ENCODE measurements at regions of chr2 and their contacts with region 1.

Region 1: DNA sequence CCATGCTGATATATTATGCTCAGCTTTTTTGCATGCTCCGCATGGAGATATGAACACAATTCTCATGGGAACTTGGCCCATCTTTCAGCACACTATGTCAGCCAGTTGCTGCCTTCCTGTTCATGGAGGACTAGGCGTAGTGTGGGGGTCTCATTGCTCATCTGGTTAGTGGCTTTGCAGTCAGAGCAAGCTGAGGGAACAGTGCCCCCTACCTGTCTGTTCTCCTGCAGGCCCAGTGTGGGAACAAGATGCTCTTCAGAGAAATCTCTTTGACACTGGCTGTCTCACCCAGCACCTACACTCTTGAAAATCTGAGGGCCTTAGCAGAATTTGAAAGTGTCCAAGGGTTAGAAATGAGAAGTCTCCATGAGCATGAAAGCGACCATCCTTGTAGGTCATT is 47.1 kb downstream of the SPTBN1 start:
- DNase-seq: peak; percentile 66
- H3K4me3 ChIP-seq: no peak overlapping the region
- H3K27ac ChIP-seq: no peak overlapping the region
- H3K4me1 ChIP-seq: peaks cover 4% of the 10 kb centered on the region
- H3K27me3 ChIP-seq: no peaks in the 10 kb centered on the region
- CTCF ChIP-seq: peak; percentile 71 to 80
- POLR2A ChIP-seq: no peak

Region 2: GRCh38 chr2:54115284-54116137 is 387.7 kb before region 1 on chr2 and contains the start of gene ACYP2:
- CTCF ChIA-PET with region 1: interaction called, 4 read pairs
- POLR2A ChIA-PET with region 1: no interaction called
- dilution Hi-C with region 1: no loop called
- intact Hi-C with region 1: loop called (anchors 2 kb)
- DNase-seq: peak; percentile 92
- H3K4me3 ChIP-seq: peak within 1 kb of the TSS; percentile 53 to 91 (median 74)
- H3K27ac ChIP-seq: peak within 1 kb of the TSS; percentile 93
- H3K4me1 ChIP-seq: peaks cover 6% of the 10 kb centered on the region
- H3K27me3 ChIP-seq: no peaks in the 10 kb centered on the region
- CTCF ChIP-seq: peak in 1 of 2 donors; percentile 25
- POLR2A ChIP-seq: no peak
- total RNA-seq, gene ACYP2: 5.8 and 7.9 TPM in 2 replicates

Region 3: DNA sequence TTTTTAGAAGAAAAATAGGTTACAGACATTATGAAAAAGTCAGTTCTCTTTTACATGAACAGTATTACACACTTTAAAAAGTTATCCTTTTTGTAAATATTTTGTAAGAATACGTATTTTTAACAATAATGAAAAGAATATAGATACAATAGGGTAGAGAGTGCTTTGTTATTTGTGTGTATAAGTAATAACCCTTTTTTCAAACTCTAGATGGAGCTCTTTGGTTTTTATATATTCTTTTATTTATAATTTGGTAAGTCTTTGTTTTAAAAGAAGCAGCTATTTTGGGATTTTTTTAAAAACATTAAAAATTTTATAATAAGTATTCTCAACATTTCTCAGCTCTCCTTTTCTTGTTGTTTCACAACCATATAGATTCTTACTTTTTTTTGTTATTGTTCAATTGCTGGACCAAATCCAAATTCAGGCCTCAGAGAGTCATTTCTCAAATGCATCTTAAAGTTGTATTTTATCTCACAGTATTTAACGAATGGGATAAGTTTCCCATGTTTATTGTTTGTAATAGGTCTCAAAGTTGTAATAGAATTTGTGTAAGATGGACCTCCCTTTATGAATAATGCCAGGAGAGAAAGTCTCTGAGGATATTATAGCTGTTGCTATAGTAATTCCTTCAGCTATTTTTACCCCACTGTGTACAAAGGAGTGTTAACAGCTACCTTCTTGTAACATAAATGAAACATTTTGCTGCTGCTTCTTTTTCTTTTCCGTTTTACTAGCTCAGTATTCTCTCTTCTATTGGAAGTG is 341.4 kb before region 1 on chr2:
- CTCF ChIA-PET with region 1: interaction called, 27 read pairs
- POLR2A ChIA-PET with region 1: no interaction called
- dilution Hi-C with region 1: no loop called
- intact Hi-C with region 1: no loop called
- DNase-seq: peak; percentile 22
- H3K4me3 ChIP-seq: no peak overlapping the region
- H3K27ac ChIP-seq: no peak overlapping the region
- H3K4me1 ChIP-seq: no peaks in the 10 kb centered on the region
- H3K27me3 ChIP-seq: no peaks in the 10 kb centered on the region
- CTCF ChIP-seq: no peak
- POLR2A ChIP-seq: no peak

Region 4: DNA sequence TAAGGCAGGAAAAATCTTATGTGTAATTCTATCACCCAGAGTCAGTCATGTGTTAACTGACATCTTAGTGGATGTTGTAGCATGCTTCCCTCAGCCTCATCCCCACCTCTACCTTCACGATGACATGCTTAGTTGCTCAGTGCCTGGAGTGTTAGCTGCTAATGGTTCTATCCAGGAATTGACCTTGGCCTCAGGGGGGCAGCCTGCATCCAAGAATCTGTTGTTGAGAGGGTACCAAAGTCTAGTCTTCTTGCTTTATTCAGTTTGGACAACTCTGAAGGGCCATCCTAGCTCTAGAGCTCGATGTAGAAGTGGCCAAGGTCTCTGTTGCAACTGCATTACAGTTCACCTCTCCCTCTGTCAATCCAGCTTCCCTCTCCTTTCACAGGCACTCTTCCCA is 326.6 kb before region 1 on chr2:
- CTCF ChIA-PET with region 1: interaction called, 13 read pairs
- POLR2A ChIA-PET with region 1: no interaction called
- dilution Hi-C with region 1: no loop called
- intact Hi-C with region 1: no loop called
- DNase-seq: peak; percentile 43
- H3K4me3 ChIP-seq: no peak overlapping the region
- H3K27ac ChIP-seq: no peak overlapping the region
- H3K4me1 ChIP-seq: no peaks in the 10 kb centered on the region
- H3K27me3 ChIP-seq: no peaks in the 10 kb centered on the region
- CTCF ChIP-seq: peak; percentile 29 to 30
- POLR2A ChIP-seq: no peak

Region 5: GRCh38 chr2:54206596-54206995 is 296.6 kb before region 1 on chr2:
- CTCF ChIA-PET with region 1: interaction called, 43 read pairs
- POLR2A ChIA-PET with region 1: no interaction called
- dilution Hi-C with region 1: no loop called
- intact Hi-C with region 1: loop called (anchors 1 kb)
- DNase-seq: peak; percentile 58
- H3K4me3 ChIP-seq: no peak overlapping the region
- H3K27ac ChIP-seq: no peak overlapping the region
- H3K4me1 ChIP-seq: peaks cover 7% of the 10 kb centered on the region
- H3K27me3 ChIP-seq: no peaks in the 10 kb centered on the region
- CTCF ChIP-seq: peak; percentile 29 to 33
- POLR2A ChIP-seq: no peak

Region 6: GRCh38 chr2:54341656-54342055 is 161.5 kb before region 1 on chr2:
- CTCF ChIA-PET with region 1: interaction called, 22 read pairs
- POLR2A ChIA-PET with region 1: no interaction called
- dilution Hi-C with region 1: no loop called
- intact Hi-C with region 1: no loop called
- DNase-seq: peak; percentile 22
- H3K4me3 ChIP-seq: no peak overlapping the region
- H3K27ac ChIP-seq: no peak overlapping the region
- H3K4me1 ChIP-seq: no peaks in the 10 kb centered on the region
- H3K27me3 ChIP-seq: peaks cover 0 to 3% of the 10 kb centered on the region in 2 experiments
- CTCF ChIP-seq: no peak
- POLR2A ChIP-seq: no peak

Region 7: DNA sequence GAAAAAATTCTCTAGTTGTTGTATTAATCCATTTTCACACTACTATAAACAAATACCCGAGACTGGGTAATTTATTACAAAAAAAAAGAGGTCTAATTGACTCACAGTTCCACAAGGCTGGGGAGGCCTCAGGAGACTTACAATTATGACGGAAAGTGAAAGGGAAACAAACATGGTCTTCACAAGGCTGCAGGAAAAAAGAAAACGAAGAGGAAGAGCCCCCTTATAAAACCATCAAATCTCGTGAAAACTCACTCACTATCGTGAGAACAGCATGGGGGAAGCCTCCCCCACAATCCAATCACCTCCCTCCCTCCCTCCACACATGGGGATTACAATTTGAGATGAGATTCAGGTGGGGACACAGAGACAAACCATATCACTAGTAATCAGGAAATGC is 108.8 kb before region 1 on chr2:
- CTCF ChIA-PET with region 1: no interaction called
- POLR2A ChIA-PET with region 1: no interaction called
- dilution Hi-C with region 1: no loop called
- intact Hi-C with region 1: no loop called
- DNase-seq: no peak
- H3K4me3 ChIP-seq: no peak overlapping the region
- H3K27ac ChIP-seq: no peak overlapping the region
- H3K4me1 ChIP-seq: no peaks in the 10 kb centered on the region
- H3K27me3 ChIP-seq: no peaks in the 10 kb centered on the region
- CTCF ChIP-seq: no peak
- POLR2A ChIP-seq: no peak

Region 8: DNA sequence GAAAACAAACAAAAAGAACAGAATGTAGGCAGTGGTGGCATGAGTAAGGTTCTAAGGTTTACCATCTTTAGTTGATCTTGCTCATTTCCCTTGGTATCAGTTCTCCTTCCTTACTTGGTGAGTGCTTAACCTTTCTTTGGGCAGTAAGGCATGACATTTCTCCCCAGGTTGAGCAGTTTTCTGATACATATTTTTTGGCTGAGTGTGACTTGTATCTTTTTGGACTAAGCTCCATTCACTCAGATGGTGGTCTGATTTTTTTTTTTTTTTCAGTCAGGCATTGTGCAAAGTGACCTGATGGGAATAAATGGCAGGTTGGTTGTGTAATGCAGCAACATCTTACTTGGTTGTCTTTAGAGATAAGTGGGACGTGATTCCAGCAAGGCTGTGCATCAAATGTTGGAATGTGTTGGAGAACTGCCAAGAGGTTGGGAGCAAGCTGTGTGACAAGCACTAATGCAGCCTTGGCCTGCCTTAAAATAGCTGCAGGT is 31.9 kb before region 1 on chr2:
- CTCF ChIA-PET with region 1: no interaction called
- POLR2A ChIA-PET with region 1: no interaction called
- dilution Hi-C with region 1: no loop called
- intact Hi-C with region 1: no loop called
- DNase-seq: peak; percentile 65
- H3K4me3 ChIP-seq: no peak overlapping the region
- H3K27ac ChIP-seq: peak overlapping the region; percentile 45
- H3K4me1 ChIP-seq: peaks cover 33% of the 10 kb centered on the region
- H3K27me3 ChIP-seq: no peaks in the 10 kb centered on the region
- CTCF ChIP-seq: no peak
- POLR2A ChIP-seq: no peak

Region 9: GRCh38 chr2:54522624-54523281 is 19.6 kb after region 1 on chr2:
- CTCF ChIA-PET with region 1: interaction called, 10 read pairs
- POLR2A ChIA-PET with region 1: no interaction called
- dilution Hi-C with region 1: no loop called
- intact Hi-C with region 1: no loop called
- DNase-seq: peak; percentile 44
- H3K4me3 ChIP-seq: no peak overlapping the region
- H3K27ac ChIP-seq: no peak overlapping the region
- H3K4me1 ChIP-seq: peaks cover 10% of the 10 kb centered on the region
- H3K27me3 ChIP-seq: no peaks in the 10 kb centered on the region
- CTCF ChIP-seq: peak; percentile 48 to 68
- POLR2A ChIP-seq: no peak

Region 10: DNA sequence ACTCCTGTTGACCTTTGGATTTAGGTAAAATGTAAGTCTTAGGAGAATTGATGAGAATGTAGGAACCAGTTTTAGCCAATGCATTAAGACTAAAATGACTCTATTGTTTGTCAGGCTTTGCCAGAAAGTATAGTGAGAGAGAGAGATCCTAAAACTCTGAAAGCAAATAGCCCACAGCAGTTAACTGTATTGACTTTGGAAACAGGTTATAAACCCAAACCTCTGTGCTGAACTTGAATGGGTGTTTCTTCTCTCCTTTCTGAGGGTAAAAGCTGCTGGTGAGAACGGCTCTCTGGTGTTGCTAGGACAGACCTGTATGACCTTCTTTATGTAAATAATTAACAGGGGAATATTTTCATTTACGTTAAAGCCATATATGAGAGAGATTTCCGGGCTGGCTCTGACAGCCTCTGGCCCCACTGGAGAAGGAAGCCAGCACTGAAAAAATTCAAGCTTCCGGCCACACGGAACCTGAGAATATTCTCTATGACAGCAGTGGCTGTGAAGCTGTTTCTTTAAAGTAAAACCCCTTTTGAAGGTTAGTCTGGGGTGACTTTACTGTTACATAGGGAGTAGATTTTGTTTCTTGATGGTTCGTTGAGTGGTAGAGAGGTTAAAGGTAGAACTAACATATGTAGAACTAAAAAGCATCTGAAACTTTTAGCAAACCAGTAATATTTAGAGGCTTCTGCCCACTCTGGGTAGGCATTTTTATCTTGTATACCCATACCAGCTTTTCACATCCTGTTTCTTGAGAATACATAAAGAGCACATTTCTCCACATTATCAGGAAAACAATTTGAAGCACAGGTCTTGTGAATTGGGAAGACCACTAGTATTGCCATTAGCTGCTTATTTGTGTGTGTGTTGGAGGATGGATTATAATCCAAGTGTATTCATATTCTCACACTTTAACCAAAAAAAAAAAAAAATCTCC is 76.8 kb after region 1 on chr2:
- CTCF ChIA-PET with region 1: no interaction called
- POLR2A ChIA-PET with region 1: no interaction called
- dilution Hi-C with region 1: no loop called
- intact Hi-C with region 1: no loop called
- DNase-seq: peak; percentile 60
- H3K4me3 ChIP-seq: no peak overlapping the region
- H3K27ac ChIP-seq: peak overlapping the region; percentile 60
- H3K4me1 ChIP-seq: peaks cover 52% of the 10 kb centered on the region
- H3K27me3 ChIP-seq: no peaks in the 10 kb centered on the region
- CTCF ChIP-seq: no peak
- POLR2A ChIP-seq: no peak

Measured in endothelial cell of umbilical vein (primary cell).